ENCODE measurements at regions of chr2 and their contacts with region 1.

Region 1: DNA sequence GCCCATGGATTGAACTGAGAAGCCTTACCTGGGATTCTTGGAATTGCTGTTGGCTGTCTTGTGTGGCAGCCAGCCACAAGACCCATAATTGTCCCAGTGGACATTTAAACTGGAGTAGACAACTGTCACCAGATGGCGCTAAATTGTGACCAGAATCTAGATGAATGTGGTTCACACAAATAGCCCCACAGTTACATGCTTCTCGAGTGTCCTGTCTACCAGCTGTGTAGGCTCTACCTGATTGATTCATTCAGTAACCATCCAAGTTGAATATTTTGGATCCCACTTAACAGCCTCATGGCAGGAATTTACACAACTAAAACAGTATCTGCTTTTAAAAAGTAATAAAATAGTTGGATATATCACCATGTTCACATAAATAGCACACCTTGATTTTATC is 73.2 kb downstream of the MAP4K4 start:
- DNase-seq: peak; percentile 33
- CTCF ChIP-seq: peak; percentile 62

Region 2: DNA sequence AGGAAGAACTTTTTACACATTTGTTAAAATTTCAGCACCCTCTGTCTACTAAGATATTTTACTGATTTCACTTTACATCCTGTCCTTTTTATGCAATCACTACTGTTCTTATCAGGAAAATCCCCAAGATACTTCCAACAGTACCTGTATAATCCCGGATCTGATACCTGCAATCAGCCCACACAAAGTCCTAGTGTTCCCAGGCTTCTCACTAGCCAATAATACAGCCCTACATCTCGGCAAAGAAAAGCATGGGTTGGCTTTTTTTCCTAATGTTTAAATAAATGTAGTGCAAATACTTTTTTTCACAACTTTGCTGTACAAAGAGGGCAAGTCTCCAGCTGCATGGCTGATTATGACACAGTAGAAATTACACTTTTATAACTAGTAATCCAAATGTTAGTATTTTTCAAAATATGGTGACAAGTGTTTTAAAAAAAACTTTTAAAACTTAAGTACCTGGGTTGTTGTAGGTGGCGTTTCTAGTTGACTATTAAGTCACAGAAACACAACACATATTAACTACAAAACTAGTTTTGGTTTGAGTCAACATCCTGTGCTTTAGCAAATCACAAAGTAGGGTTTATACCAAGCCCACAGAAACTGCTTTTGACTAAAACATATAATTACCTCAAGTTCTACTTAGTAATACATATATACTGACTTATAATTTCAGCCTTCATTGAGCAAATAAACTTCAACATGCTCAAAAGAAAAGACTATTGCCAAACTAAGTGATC is 498.5 kb before region 1 on chr2:
- CTCF ChIA-PET with region 1: no interaction called
- POLR2A ChIA-PET with region 1: no interaction called
- DNase-seq: peak; percentile 74
- CTCF ChIP-seq: no peak

Region 3: DNA sequence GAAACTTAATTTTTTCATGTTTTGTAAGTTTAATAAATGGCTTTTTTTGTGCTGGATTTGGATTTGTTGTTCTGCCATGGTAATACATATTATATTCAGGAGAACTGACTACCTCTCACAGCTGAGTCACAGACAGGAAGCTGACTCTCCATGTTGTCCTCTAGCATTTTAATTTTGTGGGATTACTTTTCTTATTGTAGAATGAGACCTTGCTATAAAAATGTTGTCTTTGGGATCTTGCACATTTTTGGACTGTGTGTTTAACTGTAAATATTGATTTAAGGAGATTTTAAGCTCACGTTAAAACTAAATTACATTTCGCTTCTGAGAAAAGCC is 24.4 kb before region 1 on chr2:
- CTCF ChIA-PET with region 1: interaction called, 14 read pairs
- POLR2A ChIA-PET with region 1: no interaction called
- DNase-seq: no peak
- CTCF ChIP-seq: no peak

Region 4: DNA sequence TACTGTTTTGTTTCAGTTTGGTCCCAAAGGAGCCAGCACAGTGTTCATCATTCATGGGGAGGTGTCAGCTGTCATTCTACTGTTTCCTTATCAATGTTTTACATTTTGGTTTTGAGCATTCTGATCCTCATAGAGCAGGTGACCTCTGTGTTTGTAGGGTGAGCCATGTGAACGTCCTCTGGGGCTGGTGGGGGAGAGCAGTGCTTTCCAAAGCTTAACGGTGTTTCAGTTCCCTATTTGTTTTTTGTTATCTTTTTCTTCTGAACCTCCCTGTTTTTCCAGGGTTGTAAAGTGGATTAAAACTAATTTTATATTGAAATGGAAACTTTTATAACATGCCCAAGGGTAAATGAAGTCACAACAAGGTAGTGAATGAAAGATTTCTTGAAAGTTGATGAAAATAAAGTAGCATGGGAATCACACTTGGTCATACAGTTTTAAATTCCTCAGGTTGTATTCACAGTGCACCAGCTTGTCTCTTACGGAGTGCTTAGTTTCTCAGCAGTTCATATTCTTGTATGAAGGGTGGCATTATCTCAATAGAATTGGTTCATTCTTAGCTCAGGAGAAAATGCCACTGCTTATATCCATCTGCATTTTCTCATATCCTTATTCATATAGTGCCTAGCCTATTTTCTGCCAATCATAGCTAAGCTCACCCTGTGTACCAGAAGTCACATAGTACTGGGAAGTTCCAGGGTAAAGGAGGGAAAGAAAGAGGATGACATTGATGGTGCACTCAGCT is 18.7 kb before region 1 on chr2:
- CTCF ChIA-PET with region 1: interaction called, 14 read pairs
- POLR2A ChIA-PET with region 1: no interaction called
- DNase-seq: peak; percentile 51
- CTCF ChIP-seq: no peak

Region 5: GRCh38 chr2:101759162-101759561 is 11.6 kb before region 1 on chr2:
- CTCF ChIA-PET with region 1: interaction called, 18 read pairs
- POLR2A ChIA-PET with region 1: no interaction called
- DNase-seq: no peak
- CTCF ChIP-seq: no peak

Region 6: GRCh38 chr2:101781326-101781725 is 10.6 kb after region 1 on chr2:
- CTCF ChIA-PET with region 1: interaction called, 43 read pairs
- POLR2A ChIA-PET with region 1: no interaction called
- DNase-seq: no peak
- CTCF ChIP-seq: no peak

Region 7: GRCh38 chr2:101831351-101831865 is 60.7 kb after region 1 on chr2:
- CTCF ChIA-PET with region 1: interaction called, 21 read pairs
- POLR2A ChIA-PET with region 1: no interaction called
- DNase-seq: peak; percentile 55
- CTCF ChIP-seq: peak; percentile 73

Region 8: GRCh38 chr2:101873543-101873942 is 102.8 kb after region 1 on chr2:
- CTCF ChIA-PET with region 1: interaction called, 14 read pairs
- POLR2A ChIA-PET with region 1: no interaction called
- DNase-seq: no peak
- CTCF ChIP-seq: peak; percentile 19